Activated CD4-positive, alpha-beta memory T cell treated with anti-CD3 and anti-CD28 coated beads for 36 hours (primary cell): ENCODE measurements at regions of chr11 and their contacts with region 1.

Region 1: DNA sequence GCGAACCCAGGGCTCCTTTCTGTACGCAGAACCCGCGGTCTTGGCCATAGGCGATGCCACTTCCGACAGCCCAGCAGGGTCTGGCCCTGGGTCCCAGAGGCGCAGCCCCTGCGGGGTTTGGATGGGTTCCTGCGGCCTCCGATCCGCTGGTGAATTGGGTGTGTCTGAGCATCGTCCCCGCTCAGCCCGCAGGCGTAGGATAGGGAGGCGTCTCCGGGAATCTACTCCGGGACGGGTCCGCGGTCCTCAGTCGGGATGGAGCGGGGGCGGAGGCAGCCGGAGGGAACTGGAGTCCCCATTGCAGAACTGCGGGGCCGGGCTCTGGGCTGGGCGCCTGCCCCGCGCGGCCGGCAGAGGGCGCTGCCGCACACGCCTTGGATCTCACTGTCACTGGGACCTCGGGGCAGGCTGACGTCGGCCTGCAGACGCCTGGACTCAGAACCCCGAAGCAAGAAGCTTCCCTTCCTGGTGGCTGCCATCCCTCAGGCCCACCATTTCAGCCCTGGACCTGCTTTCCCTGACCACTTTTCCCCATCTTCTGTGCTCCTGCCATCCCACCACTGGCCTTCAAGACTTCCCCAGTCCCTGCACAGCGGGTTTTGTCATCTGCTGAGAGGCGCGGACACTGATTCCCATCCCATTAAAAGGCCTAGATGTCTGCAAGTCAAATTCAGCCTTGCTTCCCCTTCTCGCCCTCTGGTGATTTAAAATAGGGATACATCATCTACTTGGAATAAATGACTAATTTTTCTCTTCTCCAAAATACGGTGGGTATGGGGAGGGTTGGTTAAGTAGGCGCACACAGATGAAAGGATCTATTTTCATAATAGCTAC is 38.3 kb upstream of the CREB3L1 start:
- DNase-seq: peak; percentile 89
- H3K4me3 Mint-ChIP-seq: peak overlapping the region; percentile 74
- H3K27ac Mint-ChIP-seq: no peak overlapping the region
- H3K4me1 Mint-ChIP-seq: peaks cover 36% of the 10 kb centered on the region
- H3K27me3 Mint-ChIP-seq: peaks cover 1% of the 10 kb centered on the region

Region 2: GRCh38 chr11:45896422-45896984 is 342.7 kb before region 1 on chr11:
- CTCF ChIA-PET with region 1: no interaction called
- POLR2A ChIA-PET with region 1: no interaction called
- intact Hi-C with region 1: no loop called
- DNase-seq: no peak
- H3K4me3 Mint-ChIP-seq: no peak overlapping the region
- H3K27ac Mint-ChIP-seq: no peak overlapping the region
- H3K4me1 Mint-ChIP-seq: no peaks in the 10 kb centered on the region
- H3K27me3 Mint-ChIP-seq: peaks cover 27% of the 10 kb centered on the region

Region 3: DNA sequence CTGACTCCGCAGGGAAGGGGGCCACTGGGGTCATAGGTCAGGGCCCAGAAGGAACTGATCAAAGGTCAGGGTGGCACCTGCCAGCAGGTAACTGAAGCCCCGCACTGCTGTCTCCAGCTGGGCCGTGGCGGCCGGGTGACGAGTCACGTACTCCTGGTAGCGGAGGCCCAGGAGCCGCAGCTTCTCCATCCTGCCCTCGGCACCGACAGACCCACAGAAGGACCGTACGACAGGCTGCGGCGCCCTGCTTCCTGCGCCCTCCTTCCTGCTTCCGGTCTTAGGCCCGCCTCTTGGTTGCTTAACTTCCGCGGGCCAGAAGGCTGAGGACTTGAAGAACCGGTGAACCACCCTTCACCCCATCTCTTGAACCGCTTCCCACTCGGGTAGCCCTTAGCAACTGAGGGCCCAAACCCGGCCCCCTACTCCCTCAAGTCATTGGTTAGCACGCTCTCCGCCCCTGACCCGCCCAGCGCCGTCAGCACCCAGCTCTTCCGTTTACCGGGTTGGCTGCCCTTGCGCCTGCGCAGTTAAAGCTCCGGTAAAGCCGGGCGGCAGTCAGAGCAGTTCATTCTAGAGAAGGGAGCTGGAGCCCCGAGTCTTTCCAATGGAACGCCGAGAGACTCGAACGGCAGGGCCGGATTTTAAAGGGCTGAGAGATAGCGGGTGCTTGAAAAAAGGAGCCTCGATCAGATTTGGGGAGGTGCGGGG is 321.4 kb before region 1 on chr11 and contains the start of gene PEX16:
- CTCF ChIA-PET with region 1: interaction called, 4 read pairs
- POLR2A ChIA-PET with region 1: interaction called, 4 read pairs
- intact Hi-C with region 1: loop called (anchors 2 kb)
- DNase-seq: peak; percentile 98
- H3K4me3 Mint-ChIP-seq: peak within 1 kb of the TSS; percentile 96
- H3K27ac Mint-ChIP-seq: peak within 1 kb of the TSS; percentile 96
- H3K4me1 Mint-ChIP-seq: peaks cover 26% of the 10 kb centered on the region
- H3K27me3 Mint-ChIP-seq: peaks cover 3% of the 10 kb centered on the region
- total RNA-seq, gene PEX16: 28.2 to 34.6 TPM

Region 4: GRCh38 chr11:46121724-46122477 is 117.3 kb before region 1 on chr11:
- CTCF ChIA-PET with region 1: interaction called, 7 read pairs
- POLR2A ChIA-PET with region 1: interaction called, 6 read pairs
- intact Hi-C with region 1: loop called (anchors 2 kb)
- DNase-seq: peak; percentile 82
- H3K4me3 Mint-ChIP-seq: peak overlapping the region; percentile 77
- H3K27ac Mint-ChIP-seq: peak overlapping the region; percentile 85
- H3K4me1 Mint-ChIP-seq: peaks cover 39% of the 10 kb centered on the region
- H3K27me3 Mint-ChIP-seq: no peaks in the 10 kb centered on the region

Region 5: DNA sequence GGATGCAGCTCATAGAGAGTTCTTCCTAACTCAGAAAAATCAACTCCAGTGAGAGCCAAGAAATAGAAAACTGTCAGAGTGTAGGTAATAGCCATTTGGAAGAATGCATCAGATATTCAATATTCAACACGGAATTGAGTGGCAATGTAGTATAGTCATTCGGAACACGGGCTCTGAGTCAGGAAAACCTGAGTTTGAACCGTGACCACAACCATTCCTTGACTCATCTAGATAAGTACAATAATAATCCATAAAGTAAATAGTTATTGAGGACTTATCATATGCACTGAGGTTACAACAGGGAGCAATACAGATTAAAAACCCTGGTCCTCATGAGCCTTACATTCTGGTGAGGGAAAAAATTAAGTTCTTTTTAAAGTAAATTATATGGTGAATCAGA is 55.4 kb before region 1 on chr11:
- CTCF ChIA-PET with region 1: no interaction called
- POLR2A ChIA-PET with region 1: no interaction called
- intact Hi-C with region 1: no loop called
- DNase-seq: no peak
- H3K4me3 Mint-ChIP-seq: no peak overlapping the region
- H3K27ac Mint-ChIP-seq: no peak overlapping the region
- H3K4me1 Mint-ChIP-seq: no peaks in the 10 kb centered on the region
- H3K27me3 Mint-ChIP-seq: peaks cover 15% of the 10 kb centered on the region

Region 6: DNA sequence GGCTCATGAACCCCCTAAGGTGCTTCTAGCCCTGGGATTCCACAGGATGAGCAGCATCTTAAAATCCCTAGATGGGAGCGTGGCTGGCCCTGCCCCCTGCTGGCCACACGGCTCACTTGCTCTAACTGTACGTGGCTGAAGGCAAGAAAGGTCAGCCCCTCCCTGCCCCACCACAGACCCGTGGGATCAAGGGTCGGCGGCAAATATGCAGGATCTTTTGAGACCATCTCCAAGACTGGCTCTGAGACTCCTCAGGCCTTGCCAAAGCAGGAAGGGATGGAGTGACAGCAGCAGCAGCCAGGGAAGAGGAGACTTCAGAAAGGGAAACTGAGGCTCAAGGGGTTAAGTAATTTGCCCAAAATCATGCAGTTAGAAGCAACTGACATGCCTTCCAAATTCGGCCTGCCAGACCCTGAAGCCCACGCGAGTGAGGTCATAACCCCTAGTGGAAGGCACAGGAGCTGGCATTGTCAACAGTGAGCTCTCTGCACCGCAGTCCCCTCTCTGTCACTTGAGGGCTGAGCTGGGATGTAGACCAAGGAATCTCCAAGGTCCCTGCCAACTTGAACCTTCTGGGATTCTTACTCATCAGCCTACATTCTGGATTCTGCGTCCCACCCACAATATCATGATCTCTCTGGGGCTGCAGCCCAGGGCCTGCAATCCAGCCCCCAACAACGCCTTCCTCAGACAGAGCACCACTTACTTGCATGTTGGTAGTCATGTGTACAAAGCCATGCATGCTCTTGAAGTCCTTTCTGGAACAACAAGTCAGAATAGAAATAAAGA is 69.6 kb after region 1 on chr11:
- CTCF ChIA-PET with region 1: interaction called, 479 read pairs
- POLR2A ChIA-PET with region 1: interaction called, 5 read pairs
- intact Hi-C with region 1: loop called (anchors 1 kb)
- DNase-seq: peak; percentile 82
- H3K4me3 Mint-ChIP-seq: no peak overlapping the region
- H3K27ac Mint-ChIP-seq: no peak overlapping the region
- H3K4me1 Mint-ChIP-seq: peaks cover 5% of the 10 kb centered on the region
- H3K27me3 Mint-ChIP-seq: no peaks in the 10 kb centered on the region

Region 7: GRCh38 chr11:46346886-46347636 is 107.9 kb after region 1 on chr11 and contains the start of gene DGKZ:
- CTCF ChIA-PET with region 1: interaction called, 15 read pairs
- POLR2A ChIA-PET with region 1: interaction called, 3 read pairs
- intact Hi-C with region 1: loop called (anchors 1 kb)
- DNase-seq: peak; percentile 92
- H3K4me3 Mint-ChIP-seq: peak within 1 kb of the TSS; percentile 86
- H3K27ac Mint-ChIP-seq: peak within 1 kb of the TSS; percentile 90
- H3K4me1 Mint-ChIP-seq: peaks cover 80% of the 10 kb centered on the region
- H3K27me3 Mint-ChIP-seq: no peaks in the 10 kb centered on the region
- total RNA-seq, gene DGKZ: 85.3 to 88.7 TPM

Region 8: GRCh38 chr11:46537537-46538295 is 298.5 kb after region 1 on chr11:
- CTCF ChIA-PET with region 1: interaction called, 4 read pairs
- POLR2A ChIA-PET with region 1: no interaction called
- intact Hi-C with region 1: loop called (anchors 10 kb)
- DNase-seq: peak; percentile 76
- H3K4me3 Mint-ChIP-seq: no peak overlapping the region
- H3K27ac Mint-ChIP-seq: no peak overlapping the region
- H3K4me1 Mint-ChIP-seq: peaks cover 14% of the 10 kb centered on the region
- H3K27me3 Mint-ChIP-seq: no peaks in the 10 kb centered on the region

Region 9: DNA sequence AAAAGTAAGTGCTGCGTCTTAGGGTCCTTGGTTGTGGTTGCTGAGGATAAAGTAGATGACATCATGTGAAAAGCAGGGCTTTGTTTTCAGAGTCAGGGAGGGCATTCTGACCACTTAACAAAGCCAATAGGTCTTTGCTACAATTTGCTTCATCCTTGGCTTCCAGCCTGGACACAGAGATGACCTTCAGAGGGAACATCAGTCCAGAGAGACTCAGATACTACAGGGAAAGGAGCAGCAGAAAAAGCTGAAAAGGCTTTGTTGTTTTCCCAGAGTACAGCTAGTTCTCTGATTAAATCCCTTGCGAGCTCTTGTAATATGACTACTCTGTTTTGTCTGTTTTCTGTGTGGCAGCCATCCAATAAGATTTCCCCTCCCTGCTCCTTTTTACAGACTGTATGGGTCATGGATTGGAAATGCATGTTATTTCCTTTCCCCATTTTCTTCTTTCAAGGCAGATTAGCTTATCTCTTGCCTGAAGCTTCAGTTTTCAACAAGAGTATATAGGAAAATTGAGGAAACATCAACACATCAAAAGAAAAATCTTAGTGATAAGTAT is 410.1 kb after region 1 on chr11:
- CTCF ChIA-PET with region 1: no interaction called
- POLR2A ChIA-PET with region 1: no interaction called
- intact Hi-C with region 1: no loop called
- DNase-seq: no peak
- H3K4me3 Mint-ChIP-seq: no peak overlapping the region
- H3K27ac Mint-ChIP-seq: no peak overlapping the region
- H3K4me1 Mint-ChIP-seq: no peaks in the 10 kb centered on the region
- H3K27me3 Mint-ChIP-seq: no peaks in the 10 kb centered on the region

Region 10: DNA sequence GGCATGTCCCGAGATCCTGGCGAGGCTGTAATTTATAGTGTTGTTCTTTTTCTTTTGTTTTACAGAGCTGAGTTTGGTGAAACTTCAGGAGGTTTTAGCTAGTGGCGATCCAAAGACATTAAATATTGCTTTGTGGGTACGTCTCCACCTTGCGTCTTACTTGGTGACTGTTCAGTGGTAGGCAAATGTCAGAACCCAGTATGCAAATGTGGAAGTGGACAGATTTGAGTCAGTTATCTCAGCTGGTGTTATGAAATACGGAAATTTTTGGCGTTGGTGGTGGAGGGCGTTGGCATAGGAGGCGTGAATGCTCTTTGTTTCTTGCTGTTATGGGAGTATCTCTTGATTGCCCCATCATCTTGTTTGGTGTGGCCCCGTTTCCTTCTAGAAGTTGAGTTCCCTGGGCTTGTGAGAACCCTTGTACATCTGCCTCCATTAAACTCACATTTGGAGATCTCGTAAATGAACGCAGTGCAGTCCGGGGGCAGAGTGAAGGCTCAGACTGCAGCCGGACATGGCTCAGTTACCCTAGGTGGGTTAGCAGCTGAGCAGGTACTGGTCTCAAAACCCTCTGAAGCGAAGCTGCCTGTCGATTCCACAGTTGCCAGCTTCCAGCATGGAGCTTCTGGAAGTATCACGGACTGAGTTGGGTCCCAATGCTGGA is 1781.0 kb after region 1 on chr11:
- CTCF ChIA-PET with region 1: no interaction called
- POLR2A ChIA-PET with region 1: no interaction called
- intact Hi-C with region 1: loop called (anchors 5 kb)
- DNase-seq: peak; percentile 80
- H3K4me3 Mint-ChIP-seq: peak overlapping the region; percentile 68
- H3K27ac Mint-ChIP-seq: peak overlapping the region; percentile 92
- H3K4me1 Mint-ChIP-seq: peaks cover 72% of the 10 kb centered on the region
- H3K27me3 Mint-ChIP-seq: no peaks in the 10 kb centered on the region